Activated T-helper 2 cell treated with anti-CD3 and anti-CD28 coated beads, Interferon-gamma antibody, Interleukin-2, Interleukin-4, amounts not matched to agents 10 μg/mL and 5 μg/mL and 100 μg/mL, durations not matched to agents 14 hours and 24 hours and 36 hours (primary cell): ENCODE measurements at regions of chr10 and their contacts with region 1.

Region 1: DNA sequence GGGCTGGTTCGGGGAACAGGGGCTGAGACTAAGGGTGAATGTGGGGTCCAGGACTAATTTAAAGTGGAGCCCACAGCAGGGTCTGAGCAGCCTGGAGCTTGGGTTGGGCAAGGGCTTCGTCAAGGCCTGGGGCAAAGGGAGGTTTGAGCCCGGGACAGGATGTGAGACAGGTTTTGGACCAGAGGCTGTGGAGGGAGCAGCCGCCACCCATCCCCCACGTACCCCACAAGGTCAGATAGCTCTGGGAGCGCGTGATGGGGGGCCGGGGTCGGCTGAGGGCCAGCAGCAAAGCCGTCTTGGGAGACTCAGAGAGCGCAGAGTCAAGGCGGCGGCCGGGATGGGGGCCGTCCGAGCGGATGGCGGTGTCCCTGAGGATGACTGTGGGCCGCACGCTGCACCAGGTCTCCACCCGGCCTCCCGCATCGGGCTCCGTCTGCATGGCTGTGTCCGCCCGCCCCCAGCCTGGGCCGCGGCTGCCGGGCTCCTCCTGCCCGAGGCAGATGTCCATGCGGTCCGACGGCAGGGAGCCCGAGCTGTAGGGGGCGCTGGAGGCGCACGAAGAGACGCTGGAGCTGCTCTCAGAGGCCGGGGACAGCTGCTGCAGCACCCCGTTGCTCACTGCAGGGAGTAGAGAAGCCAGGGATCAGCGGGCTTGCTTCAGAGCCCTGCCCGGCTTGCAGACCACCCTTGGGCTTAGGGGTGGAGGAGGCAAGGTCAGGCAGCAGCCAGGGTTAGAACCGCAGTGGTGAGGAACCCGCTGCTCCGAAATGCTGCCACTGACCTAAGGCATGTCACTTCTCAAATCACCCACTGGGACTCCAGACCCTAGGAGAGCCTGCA is 12.1 kb downstream of the PDZD7 start:
- DNase-seq: peak; percentile 71
- H3K4me3 Mint-ChIP-seq: no peak overlapping the region
- H3K27ac Mint-ChIP-seq: no peak overlapping the region
- H3K4me1 Mint-ChIP-seq: peaks cover 18% of the 10 kb centered on the region
- H3K27me3 Mint-ChIP-seq: peaks cover 30% of the 10 kb centered on the region

Region 2: GRCh38 chr10:100864978-100865377 is 153.8 kb before region 1 on chr10:
- intact Hi-C with region 1: no loop called
- DNase-seq: no peak
- H3K4me3 Mint-ChIP-seq: no peak overlapping the region
- H3K27ac Mint-ChIP-seq: no peak overlapping the region
- H3K4me1 Mint-ChIP-seq: peaks cover 2% of the 10 kb centered on the region
- H3K27me3 Mint-ChIP-seq: peaks cover 32% of the 10 kb centered on the region

Region 3: DNA sequence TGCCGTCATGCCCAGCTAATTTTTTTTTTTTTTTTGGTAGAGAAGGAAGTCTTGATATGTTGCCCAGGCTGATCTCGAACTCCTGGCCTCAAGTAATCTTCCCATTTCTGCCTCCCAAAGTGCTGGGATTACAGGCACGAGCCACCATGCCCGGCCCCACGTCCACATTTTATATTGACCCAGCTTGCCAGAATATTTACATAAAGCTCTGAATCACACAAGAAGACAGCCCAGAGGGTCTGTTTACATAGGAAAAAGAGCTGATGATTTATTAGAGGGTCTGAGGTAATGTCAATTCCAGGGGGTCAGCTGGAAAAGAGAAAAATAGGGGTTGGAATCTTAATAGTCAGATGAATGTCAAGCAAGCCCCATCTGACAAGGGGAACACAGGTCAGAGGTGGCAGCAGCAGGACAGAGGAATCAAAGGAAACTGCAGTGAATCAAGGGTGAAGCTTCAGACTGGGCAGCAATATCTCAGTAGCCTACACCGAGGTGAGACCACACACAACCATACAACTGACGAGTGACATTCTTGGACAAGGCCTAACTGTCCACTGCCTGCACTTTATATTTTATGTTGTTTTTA is 121.9 kb before region 1 on chr10:
- intact Hi-C with region 1: no loop called
- DNase-seq: no peak
- H3K4me3 Mint-ChIP-seq: no peak overlapping the region
- H3K27ac Mint-ChIP-seq: no peak overlapping the region
- H3K4me1 Mint-ChIP-seq: no peaks in the 10 kb centered on the region
- H3K27me3 Mint-ChIP-seq: peaks cover 45% of the 10 kb centered on the region

Region 4: GRCh38 chr10:101067356-101068083 is 48.7 kb after region 1 on chr10:
- intact Hi-C with region 1: loop called (anchors 2 kb)
- DNase-seq: peak; percentile 65
- H3K4me3 Mint-ChIP-seq: peak overlapping the region; percentile 79
- H3K27ac Mint-ChIP-seq: no peak overlapping the region
- H3K4me1 Mint-ChIP-seq: peaks cover 15% of the 10 kb centered on the region
- H3K27me3 Mint-ChIP-seq: peaks cover 54% of the 10 kb centered on the region